ENCODE measurements at regions of chr7 and their contacts with region 1.

Region 1: DNA sequence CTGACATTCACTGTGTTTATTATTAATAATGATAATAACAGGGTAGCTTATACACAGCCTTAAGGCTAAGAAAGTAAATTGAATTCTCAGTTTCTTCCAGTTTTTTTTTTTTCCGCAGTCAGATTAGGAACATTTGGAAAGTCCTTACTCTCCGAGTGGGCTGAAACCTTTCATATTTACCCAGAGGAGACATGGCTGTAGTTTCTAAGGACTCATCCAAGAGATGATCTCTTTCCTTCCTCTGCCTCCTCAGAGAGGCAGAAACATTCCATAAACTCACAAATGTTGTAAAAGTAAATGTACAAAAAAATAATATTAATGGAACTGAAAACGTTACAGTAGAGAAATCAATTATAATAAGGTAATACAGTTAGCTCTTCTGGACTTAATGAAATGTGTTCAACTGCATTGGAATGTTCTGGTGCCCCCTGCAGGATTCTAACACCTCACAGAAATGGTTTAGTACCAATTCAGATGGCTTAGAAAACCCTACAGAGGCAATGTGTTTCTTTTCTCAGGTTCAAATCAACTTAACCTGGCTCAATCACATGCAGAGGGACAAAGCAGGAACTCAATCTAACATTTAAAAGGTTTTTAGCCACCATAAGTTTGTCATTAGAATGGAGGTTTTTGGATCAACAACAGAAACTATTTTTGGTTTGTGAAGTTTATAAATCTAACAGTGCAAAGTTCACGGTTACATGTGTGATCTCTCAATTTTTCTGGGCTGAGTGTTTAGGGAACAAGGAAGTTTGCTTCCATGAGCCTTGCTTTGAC is 71.7 kb downstream of the ICA1 start:
- DNase-seq: peak; percentile 54
- ATAC-seq: peak; percentile 77
- H3K4me3 ChIP-seq: no peak overlapping the region
- H3K27ac ChIP-seq: no peak overlapping the region
- H3K4me1 ChIP-seq: no peaks in the 10 kb centered on the region
- H3K27me3 ChIP-seq: no peaks in the 10 kb centered on the region
- CTCF ChIP-seq: peak; percentile 60
- POLR2A ChIP-seq: no peak
- RAD21 ChIP-seq: peak; percentile 72

Region 2: GRCh38 chr7:7257899-7258692 is 932.2 kb before region 1 on chr7:
- CTCF ChIA-PET with region 1: interaction called, 10 read pairs
- POLR2A ChIA-PET with region 1: no interaction called
- dilution Hi-C with region 1: no loop called
- in situ Hi-C with region 1: no loop called
- intact Hi-C with region 1: no loop called
- DNase-seq: peak; percentile 5
- ATAC-seq: peak; percentile 21
- H3K4me3 ChIP-seq: no peak overlapping the region
- H3K27ac ChIP-seq: no peak overlapping the region
- H3K4me1 ChIP-seq: no peaks in the 10 kb centered on the region
- H3K27me3 ChIP-seq: no peaks in the 10 kb centered on the region
- CTCF ChIP-seq: no peak
- POLR2A ChIP-seq: no peak
- RAD21 ChIP-seq: no peak

Region 3: DNA sequence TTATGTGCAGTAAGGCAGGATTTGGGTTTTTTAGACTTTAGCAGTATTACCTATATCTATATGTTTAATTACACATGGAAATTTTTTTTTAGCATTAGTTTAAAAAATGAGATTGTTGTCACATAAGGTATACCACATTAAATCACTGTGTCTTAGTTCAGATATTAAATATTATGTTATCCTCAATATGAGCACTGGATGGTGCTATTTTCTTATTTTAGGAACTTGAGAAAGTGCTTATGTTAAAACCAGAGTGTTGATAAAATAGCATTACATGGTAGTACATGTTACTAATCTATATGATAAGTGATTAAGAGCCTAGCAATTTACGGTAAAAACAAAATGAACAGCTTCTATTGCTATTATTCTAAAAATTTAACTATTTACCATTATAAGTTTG is 594.9 kb before region 1 on chr7:
- CTCF ChIA-PET with region 1: interaction called, 4 read pairs
- POLR2A ChIA-PET with region 1: no interaction called
- dilution Hi-C with region 1: no loop called
- in situ Hi-C with region 1: no loop called
- intact Hi-C with region 1: loop called (anchors 2 kb)
- DNase-seq: peak; percentile 33
- ATAC-seq: peak; percentile 65; the same call in 1 of the 2 replicates
- H3K4me3 ChIP-seq: no peak overlapping the region
- H3K27ac ChIP-seq: no peak overlapping the region
- H3K4me1 ChIP-seq: no peaks in the 10 kb centered on the region
- H3K27me3 ChIP-seq: no peaks in the 10 kb centered on the region
- CTCF ChIP-seq: peak; percentile 50
- POLR2A ChIP-seq: no peak
- RAD21 ChIP-seq: peak; percentile 58

Region 4: DNA sequence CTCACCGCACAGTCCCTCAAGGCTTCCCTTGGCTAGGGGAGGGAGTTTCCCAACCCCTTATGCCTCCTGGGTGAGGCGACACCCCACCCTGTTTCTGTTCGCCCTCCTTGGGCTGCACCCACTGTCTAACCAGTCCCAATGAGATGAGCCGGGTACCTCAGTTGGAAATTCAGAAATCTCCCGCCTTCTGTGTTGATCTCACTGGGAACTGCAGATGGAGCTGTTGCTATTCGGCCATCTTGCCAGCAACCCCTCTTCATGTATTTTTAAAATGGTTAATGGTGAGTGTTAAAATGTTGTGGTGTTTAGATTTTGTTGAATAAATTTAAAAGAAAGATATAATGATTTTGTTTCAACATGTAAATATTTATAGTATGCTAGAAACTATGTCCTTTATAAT is 527.8 kb before region 1 on chr7:
- CTCF ChIA-PET with region 1: no interaction called
- POLR2A ChIA-PET with region 1: no interaction called
- dilution Hi-C with region 1: no loop called
- in situ Hi-C with region 1: no loop called
- intact Hi-C with region 1: loop called (anchors 5 kb)
- DNase-seq: peak; percentile 34
- ATAC-seq: peak; percentile 51
- H3K4me3 ChIP-seq: no peak overlapping the region
- H3K27ac ChIP-seq: no peak overlapping the region
- H3K4me1 ChIP-seq: no peaks in the 10 kb centered on the region
- H3K27me3 ChIP-seq: no peaks in the 10 kb centered on the region
- CTCF ChIP-seq: peak; percentile 55
- POLR2A ChIP-seq: no peak
- RAD21 ChIP-seq: peak; percentile 61

Region 5: DNA sequence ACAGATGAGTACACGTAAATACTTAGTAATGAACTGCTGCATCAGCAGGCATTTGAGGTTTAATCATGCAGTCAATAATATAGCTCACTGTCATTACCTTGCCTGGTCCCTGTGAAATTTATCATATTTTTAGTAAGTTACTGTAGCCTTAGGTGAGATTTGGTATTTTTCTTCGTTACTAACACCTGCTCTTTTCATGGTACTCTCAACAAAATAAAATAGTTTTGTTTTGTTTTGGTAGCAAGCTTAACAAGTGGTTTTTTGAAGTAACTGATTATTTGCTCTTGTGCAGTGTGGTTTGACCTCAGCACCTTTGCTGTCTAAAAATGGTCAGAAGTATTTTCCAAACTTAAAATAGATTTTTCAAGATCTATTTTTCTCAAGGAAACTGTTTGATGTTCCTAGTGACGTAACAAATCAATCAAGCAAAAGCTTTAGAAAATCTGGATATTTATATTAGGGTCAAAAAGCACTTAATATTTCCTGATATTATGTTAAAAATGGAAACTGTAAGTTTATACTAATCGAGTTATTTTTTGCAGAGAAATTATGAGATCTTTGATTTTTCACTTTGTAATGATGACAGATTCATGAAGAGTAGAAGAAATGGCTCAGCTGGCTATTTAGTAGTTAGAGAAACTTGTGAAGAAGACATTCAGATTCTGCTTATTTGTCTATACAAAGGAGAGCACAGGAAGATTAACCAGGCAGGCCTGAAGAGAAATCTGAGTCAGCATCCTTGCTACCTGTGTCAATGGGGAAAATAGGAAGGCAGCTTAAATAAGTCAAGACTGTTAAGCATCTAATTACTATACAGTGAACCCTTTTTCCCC is 450.9 kb before region 1 on chr7:
- CTCF ChIA-PET with region 1: no interaction called
- POLR2A ChIA-PET with region 1: no interaction called
- dilution Hi-C with region 1: no loop called
- in situ Hi-C with region 1: no loop called
- intact Hi-C with region 1: no loop called
- DNase-seq: no peak
- ATAC-seq: no peak
- H3K4me3 ChIP-seq: no peak overlapping the region
- H3K27ac ChIP-seq: no peak overlapping the region
- H3K4me1 ChIP-seq: no peaks in the 10 kb centered on the region
- H3K27me3 ChIP-seq: no peaks in the 10 kb centered on the region
- CTCF ChIP-seq: no peak
- POLR2A ChIP-seq: no peak
- RAD21 ChIP-seq: no peak